ENCODE measurements at regions of chr6 and their contacts with region 1.

Region 1: DNA sequence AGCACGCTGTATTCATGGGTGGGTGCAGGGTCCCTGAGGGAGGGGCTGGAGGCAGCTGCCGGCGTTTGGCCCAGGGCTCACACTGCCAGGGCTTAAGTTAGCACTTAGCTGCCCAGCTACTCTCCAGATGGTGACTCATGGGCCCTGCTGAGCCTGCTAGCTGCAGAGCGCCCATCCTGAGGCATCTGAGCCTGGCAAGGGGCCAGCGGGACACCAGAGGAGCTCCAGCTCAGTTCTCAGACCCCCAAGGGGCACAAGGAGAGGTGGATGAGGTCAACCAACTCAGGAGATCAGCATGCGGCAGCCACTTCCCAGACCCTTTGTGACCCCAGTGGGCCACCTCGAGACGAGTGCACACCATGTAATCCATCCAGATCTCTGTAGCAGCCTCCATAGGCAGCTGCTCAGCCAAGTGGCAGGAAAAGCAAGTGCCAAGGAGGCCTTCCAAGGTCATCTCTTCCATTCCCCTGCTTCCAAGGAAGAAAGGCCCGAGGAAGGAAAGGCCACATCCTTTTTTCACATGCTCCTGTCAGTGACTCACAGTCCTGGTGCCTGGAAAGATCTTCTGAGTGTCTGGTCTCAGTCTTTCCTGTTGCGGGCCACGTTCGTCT is 35.3 kb downstream of the FOXP4 start:
- DNase-seq: peak; percentile 63
- H3K4me3 ChIP-seq: 0 out of 4 replicates have a peak overlapping the region, but pooled peaks of 1 of the 2 experiments have one; percentile 1
- H3K27ac ChIP-seq: peak overlapping the region; percentile 60 to 93
- H3K4me1 ChIP-seq: peaks cover 30 to 49% of the 10 kb centered on the region in 2 experiments; a peak in 3 of 4 replicates
- H3K27me3 ChIP-seq: no peaks in the 10 kb centered on the region
- CTCF ChIP-seq: no peak
- EP300 ChIP-seq: peak in 1 of 2 experiments; percentile 61; a peak in 1 of 4 replicates
- RAD21 ChIP-seq: no peak

Region 2: DNA sequence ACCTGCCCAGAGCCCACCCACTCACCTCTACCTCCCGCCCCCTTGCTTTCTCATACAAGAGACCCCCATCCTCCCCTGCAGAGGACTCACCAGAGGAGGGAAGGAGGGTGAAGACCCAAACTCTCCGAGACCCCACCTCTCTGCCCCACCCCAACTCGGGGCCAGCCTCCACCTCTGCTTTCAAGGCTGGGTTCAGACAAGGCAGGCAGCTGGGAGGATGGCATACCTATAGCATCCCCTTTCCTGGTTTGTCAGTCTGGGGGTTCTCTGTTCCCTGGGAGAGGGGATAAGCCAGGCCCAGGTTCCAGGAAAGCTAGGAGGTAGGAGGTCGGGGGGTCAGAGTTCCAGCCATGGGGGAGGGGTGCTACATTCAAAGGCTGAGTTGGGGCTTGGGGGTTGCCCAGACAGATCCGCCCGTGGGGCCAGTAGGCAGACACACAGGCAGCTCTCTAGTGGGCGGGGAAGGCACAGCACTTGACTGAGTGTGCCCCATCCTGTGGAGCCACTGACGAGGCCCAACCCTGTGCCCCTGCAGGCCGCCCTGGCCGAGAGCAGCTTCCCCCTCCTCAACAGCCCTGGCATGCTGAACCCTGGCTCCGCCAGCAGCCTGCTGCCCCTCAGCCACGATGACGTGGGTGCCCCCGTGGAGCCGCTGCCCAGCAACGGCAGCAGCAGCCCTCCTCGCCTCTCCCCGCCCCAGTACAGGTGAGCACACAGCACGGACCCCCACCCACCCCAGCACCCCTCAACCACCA is 15.9 kb after region 1 on chr6:
- CTCF ChIA-PET with region 1: interaction called, 25 read pairs
- POLR2A ChIA-PET with region 1: no interaction called
- DNase-seq: no peak
- H3K4me3 ChIP-seq: no peak overlapping the region
- H3K27ac ChIP-seq: no peak overlapping the region
- H3K4me1 ChIP-seq: peaks cover 0 to 12% of the 10 kb centered on the region in 2 experiments; a peak in 1 of 4 replicates
- H3K27me3 ChIP-seq: no peaks in the 10 kb centered on the region
- CTCF ChIP-seq: no peak
- EP300 ChIP-seq: no peak
- RAD21 ChIP-seq: no peak

Measured in SK-N-SH (cell line).